B cell (primary cell): ENCODE measurements at regions of chr2 and their contacts with region 1.

Region 1: GRCh38 chr2:85266146-85267041 is 61.4 kb downstream of the TGOLN2 start:
- DNase-seq: peak; percentile 56
- ATAC-seq: no peak
- H3K4me3 ChIP-seq: no peak overlapping the region
- H3K4me3 Mint-ChIP-seq: no peak overlapping the region
- H3K27ac ChIP-seq: no peak overlapping the region
- H3K27ac Mint-ChIP-seq: no peak overlapping the region
- H3K4me1 ChIP-seq: no peaks in the 10 kb centered on the region
- H3K4me1 Mint-ChIP-seq: no peaks in the 10 kb centered on the region
- H3K27me3 ChIP-seq: peaks cover 0 to 6% (median 1%) of the 10 kb centered on the region in 4 experiments
- H3K27me3 Mint-ChIP-seq: peaks cover 36% of the 10 kb centered on the region
- CTCF ChIP-seq: peak; percentile 95

Region 2: DNA sequence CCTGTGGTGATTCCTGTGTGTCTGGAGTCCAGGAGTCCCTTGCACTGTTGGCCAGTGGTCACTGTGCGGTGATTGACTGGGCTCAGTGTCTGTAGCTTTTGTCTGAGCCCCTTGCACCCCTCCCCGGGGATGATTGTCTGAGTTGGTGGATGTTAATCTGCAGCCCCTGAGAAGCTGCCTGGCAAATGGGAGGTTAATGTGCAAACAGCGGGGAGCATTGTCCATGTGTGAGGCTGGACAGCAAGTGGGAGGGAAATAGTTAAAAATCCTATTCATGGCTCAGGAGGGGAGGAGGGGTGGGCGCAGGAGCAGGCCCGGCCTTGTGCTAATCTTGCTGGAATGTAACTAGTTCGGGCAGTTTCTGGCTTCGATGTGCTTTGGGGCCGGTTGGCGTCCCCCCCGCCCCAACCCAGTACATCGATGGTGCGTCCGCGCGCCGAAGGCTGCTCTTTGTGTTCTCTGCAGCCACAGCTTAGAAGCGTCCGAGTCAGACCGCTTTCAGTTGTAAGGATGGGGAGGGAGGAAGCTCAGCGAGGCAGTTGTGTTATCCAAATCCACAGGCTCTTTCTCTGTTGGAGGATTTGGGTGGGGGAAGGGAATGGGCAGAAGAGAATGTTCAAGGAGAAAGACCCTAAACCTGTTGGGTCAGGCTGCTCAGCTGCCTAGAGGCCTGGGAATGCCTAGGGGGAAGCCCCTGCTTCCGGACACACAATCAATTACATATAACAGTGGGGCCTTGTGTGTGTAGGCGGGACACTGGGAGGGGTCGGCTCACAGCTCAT is 10.4 kb before region 1 on chr2:
- CTCF ChIA-PET with region 1: interaction called, 12 read pairs
- POLR2A ChIA-PET with region 1: no interaction called
- intact Hi-C with region 1: no loop called
- DNase-seq: no peak
- ATAC-seq: no peak
- H3K4me3 ChIP-seq: no peak overlapping the region
- H3K4me3 Mint-ChIP-seq: no peak overlapping the region
- H3K27ac ChIP-seq: no peak overlapping the region
- H3K27ac Mint-ChIP-seq: no peak overlapping the region
- H3K4me1 ChIP-seq: no peaks in the 10 kb centered on the region
- H3K4me1 Mint-ChIP-seq: no peaks in the 10 kb centered on the region
- H3K27me3 ChIP-seq: peaks cover 0 to 2% (median 0%) of the 10 kb centered on the region in 4 experiments
- H3K27me3 Mint-ChIP-seq: peaks cover 14% of the 10 kb centered on the region
- CTCF ChIP-seq: no peak

Region 3: GRCh38 chr2:85302121-85302520 is 35.7 kb after region 1 on chr2:
- CTCF ChIA-PET with region 1: interaction called, 91 read pairs
- POLR2A ChIA-PET with region 1: no interaction called
- intact Hi-C with region 1: loop called (anchors 1 kb)
- DNase-seq: no peak
- ATAC-seq: no peak
- H3K4me3 ChIP-seq: no peak overlapping the region
- H3K4me3 Mint-ChIP-seq: no peak overlapping the region
- H3K27ac ChIP-seq: no peak overlapping the region
- H3K27ac Mint-ChIP-seq: no peak overlapping the region
- H3K4me1 ChIP-seq: peaks cover 0 to 3% of the 10 kb centered on the region in 2 donors
- H3K4me1 Mint-ChIP-seq: peaks cover 8% of the 10 kb centered on the region
- H3K27me3 ChIP-seq: peaks cover 0 to 14% (median 3%) of the 10 kb centered on the region in 4 experiments
- H3K27me3 Mint-ChIP-seq: peaks cover 29% of the 10 kb centered on the region
- CTCF ChIP-seq: no peak